Caco-2 (cell line): ENCODE measurements at regions of chr18 and their contacts with region 1.

Region 1: DNA sequence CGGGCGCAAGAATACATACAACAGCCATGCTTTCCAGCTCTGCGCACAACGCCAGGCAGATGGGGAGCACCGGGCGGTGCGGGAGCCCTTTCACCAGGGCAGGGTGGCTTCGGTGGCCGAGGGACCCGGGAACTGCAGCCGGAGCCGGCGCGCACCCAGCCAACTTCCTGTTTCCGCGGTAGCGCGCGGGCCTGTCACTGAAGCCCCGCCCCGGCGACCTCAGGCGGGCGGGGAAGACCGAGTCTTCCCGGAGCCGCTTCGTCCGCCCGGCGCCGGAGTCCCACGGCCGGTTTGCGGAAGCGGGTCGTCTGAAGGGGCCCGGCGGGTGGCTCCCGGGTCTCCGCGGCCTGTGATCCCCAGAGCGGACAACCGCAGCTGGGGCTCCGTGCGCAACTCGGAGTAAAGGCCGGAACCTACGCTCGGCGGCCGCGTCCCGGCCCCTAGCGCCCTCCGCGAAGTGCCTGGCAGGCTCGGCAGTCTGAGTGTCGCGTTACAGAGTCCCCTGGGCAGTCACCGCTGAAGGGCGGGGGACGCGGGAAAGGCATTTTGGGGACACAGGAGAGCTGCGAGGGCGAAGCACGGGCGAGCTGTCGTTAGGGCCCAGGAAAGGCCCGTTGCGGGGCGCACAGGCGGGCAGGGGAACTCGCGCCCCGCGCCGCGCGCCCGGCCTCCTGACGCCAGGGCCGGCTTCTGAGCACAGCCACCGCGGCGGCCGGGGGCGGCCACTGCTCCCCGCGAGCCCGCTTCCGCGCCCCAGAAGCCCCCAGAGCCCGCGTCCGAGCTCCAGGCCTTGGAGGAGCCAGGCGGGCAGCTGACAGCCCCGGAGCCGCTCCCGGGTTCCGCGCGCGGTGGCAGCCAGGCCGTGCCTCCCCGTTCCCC is at the start of gene MPPE1:
- DNase-seq: peak; percentile 87 to 93
- H3K4me3 ChIP-seq: peak within 1 kb of the TSS; percentile 87
- H3K4me3 Mint-ChIP-seq: peak within 1 kb of the TSS; percentile 89
- H3K27ac Mint-ChIP-seq: peak within 1 kb of the TSS; percentile 91
- H3K4me1 ChIP-seq: peaks cover 25% of the 10 kb centered on the region
- H3K4me1 Mint-ChIP-seq: peaks cover 5% of the 10 kb centered on the region
- H3K27me3 ChIP-seq: no peaks in the 10 kb centered on the region
- H3K27me3 Mint-ChIP-seq: no peaks in the 10 kb centered on the region
- CTCF ChIP-seq: no peak
- total RNA-seq, gene MPPE1: 47.4 and 52.6 TPM in 2 replicates

Region 2: DNA sequence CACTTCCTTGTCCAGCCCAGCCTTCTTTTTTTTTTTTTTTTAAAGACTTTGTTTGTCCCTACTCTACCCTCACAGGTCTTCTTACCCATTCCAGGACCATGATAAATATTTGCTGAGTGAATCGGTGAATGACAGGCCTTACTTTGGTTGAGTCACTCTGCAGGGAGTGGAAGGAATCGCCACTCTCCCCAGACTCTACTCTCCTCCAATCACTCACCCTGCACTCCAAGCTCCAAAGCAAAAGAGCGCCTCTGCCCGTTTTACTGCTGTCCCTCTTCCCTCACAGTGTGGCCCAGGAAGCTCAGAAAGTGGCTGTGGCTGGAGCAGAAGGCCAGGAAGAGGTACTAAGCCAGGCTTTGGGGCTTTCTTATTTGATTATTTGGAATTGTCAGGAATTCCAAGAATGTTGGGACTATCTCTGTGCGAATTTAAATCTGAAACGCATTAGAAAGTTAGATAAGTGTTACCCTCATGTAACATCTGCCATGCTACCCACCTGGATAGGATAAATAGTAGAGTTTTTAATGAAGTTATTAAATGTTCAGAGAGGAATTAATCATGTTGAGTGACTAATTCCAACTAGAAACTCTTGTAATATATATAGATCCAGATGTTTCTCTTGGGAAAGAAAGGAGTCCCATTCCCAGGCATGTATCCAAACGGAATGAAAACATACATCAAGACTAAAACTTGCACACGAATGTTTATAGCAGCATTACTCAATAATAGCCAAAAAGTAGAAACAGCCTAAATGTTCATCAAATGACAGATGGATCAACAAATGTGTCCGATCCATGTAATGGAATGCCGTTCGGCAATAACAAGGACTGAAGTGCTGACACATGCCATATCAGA is 100.2 kb before region 1 on chr18:
- CTCF ChIA-PET with region 1: no interaction called
- POLR2A ChIA-PET with region 1: no interaction called
- intact Hi-C with region 1: no loop called
- DNase-seq: peak; percentile 66 to 71
- H3K4me3 ChIP-seq: no peak overlapping the region
- H3K4me3 Mint-ChIP-seq: peak overlapping the region; percentile 51
- H3K27ac Mint-ChIP-seq: peak overlapping the region; percentile 79
- H3K4me1 ChIP-seq: peaks cover 56% of the 10 kb centered on the region
- H3K4me1 Mint-ChIP-seq: peaks cover 42% of the 10 kb centered on the region
- H3K27me3 ChIP-seq: no peaks in the 10 kb centered on the region
- H3K27me3 Mint-ChIP-seq: no peaks in the 10 kb centered on the region
- CTCF ChIP-seq: no peak

Region 3: GRCh38 chr18:11887305-11888262 is 20.8 kb before region 1 on chr18:
- CTCF ChIA-PET with region 1: no interaction called
- POLR2A ChIA-PET with region 1: interaction called, 3 read pairs
- intact Hi-C with region 1: loop called (anchors 1 kb)
- DNase-seq: peak; percentile 82 to 89
- H3K4me3 ChIP-seq: no peak overlapping the region
- H3K4me3 Mint-ChIP-seq: peak overlapping the region; percentile 12
- H3K27ac Mint-ChIP-seq: peak overlapping the region; percentile 78
- H3K4me1 ChIP-seq: peaks cover 54% of the 10 kb centered on the region
- H3K4me1 Mint-ChIP-seq: peaks cover 34% of the 10 kb centered on the region
- H3K27me3 ChIP-seq: no peaks in the 10 kb centered on the region
- H3K27me3 Mint-ChIP-seq: no peaks in the 10 kb centered on the region
- CTCF ChIP-seq: no peak

Region 4: DNA sequence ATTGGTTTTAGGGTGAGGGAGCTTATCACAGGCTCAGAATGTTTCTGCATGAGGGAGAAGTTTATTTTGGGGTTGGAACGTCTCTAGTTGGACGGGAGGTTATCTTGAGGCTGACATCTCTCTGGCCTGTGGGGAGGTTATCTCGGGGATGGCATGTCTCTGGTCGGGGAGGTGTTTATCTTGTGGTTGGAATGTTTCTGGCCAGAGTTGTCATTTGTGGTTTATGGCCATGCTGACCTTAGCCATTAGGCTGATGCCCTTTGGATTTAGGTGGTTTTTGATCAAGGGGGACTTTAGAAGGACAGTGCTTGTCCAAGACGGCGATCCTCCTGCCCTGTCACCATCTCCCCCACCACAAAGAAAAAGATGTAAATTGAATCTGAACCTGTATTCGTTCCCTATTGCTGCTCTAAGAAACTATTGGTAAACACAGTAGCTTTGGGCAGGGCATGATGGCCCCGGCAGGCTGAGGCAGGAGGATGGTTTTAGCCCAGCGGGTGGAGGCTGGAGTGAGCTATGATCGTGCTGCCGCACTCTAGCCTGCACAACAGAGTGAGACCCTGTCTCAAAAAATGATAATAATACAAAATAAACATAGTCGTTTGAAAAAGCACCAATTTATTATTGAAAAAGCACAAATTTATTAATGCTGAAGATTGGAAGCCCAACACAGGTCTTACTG is 17.5 kb after region 1 on chr18:
- CTCF ChIA-PET with region 1: no interaction called
- POLR2A ChIA-PET with region 1: no interaction called
- intact Hi-C with region 1: loop called (anchors 2 kb)
- DNase-seq: peak; percentile 76 to 88
- H3K4me3 ChIP-seq: no peak overlapping the region
- H3K4me3 Mint-ChIP-seq: peak overlapping the region; percentile 9
- H3K27ac Mint-ChIP-seq: peak overlapping the region; percentile 42
- H3K4me1 ChIP-seq: peaks cover 33% of the 10 kb centered on the region
- H3K4me1 Mint-ChIP-seq: peaks cover 31% of the 10 kb centered on the region
- H3K27me3 ChIP-seq: no peaks in the 10 kb centered on the region
- H3K27me3 Mint-ChIP-seq: no peaks in the 10 kb centered on the region
- CTCF ChIP-seq: no peak

Region 5: DNA sequence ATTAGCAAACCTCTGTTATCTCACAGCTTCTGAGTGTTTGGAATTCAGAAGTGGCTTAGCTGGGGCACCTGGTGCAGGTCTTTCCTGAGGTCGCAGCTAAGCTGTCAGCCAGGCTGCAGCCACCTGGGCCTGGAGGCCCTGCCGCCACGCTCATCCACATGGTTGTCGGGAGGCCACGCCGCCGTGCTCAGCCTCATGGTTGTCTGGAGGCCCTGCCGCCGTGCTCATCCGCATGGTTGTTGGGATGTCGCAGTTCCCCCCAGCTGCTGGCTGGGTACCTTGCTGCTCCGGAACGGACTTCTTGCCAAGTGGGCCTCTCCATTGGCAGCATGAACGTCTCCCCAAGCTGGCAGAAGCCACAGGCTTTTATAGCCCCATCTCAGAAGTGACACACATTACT is 24.0 kb after region 1 on chr18:
- CTCF ChIA-PET with region 1: no interaction called
- POLR2A ChIA-PET with region 1: no interaction called
- intact Hi-C with region 1: loop called (anchors 2 kb)
- DNase-seq: peak in 1 of 2 experiments; percentile 33
- H3K4me3 ChIP-seq: no peak overlapping the region
- H3K4me3 Mint-ChIP-seq: no peak overlapping the region
- H3K27ac Mint-ChIP-seq: no peak overlapping the region
- H3K4me1 ChIP-seq: peaks cover 7% of the 10 kb centered on the region
- H3K4me1 Mint-ChIP-seq: no peaks in the 10 kb centered on the region
- H3K27me3 ChIP-seq: no peaks in the 10 kb centered on the region
- H3K27me3 Mint-ChIP-seq: no peaks in the 10 kb centered on the region
- CTCF ChIP-seq: no peak

Region 6: DNA sequence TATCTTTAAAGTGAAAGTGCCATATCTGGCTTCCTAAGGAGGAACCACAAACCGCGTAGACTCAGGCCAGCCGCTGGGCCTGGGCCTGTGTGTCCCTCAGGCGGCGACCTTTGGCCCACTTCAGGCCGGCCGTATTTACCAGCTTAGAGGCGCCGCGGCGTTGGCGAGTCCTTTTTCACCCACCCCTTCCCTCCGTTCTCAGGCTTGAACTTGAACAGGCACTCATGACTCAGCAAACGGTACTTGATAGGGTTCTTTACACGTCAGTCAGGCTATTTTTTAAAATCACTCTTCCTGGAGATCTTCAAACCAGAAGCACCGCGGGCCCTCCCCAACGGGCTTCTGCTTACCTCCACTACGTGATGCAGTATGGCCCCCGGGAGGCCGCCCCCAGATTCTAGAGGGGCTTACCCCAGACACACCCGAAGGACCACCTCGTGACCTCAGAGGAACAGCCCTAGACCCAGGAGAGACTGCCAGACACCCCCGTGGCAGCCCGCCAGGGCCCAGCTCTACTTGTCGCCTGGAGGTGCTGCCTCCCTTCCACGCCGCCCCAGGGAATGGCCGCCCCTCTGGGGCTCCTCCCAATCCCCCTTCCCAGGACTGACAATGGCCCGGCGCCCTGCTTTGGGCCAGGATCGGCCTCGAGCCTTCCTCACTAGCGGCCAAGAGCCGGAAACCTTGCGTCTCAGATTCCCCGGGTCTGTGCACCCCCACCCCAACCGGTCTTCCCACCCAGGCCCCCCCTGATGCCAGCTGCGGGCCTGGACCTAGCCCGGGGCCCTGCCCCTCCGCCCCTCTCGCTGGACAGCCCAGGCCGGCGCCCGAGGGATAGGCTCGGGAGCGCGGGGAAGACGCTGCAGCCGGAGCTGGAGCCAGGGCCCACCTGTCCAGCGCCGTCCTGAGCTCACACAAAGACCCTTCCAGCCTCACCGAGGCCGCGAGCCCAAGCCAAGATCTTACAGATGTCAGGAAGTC is 39.1 kb after region 1 on chr18:
- CTCF ChIA-PET with region 1: no interaction called
- POLR2A ChIA-PET with region 1: no interaction called
- intact Hi-C with region 1: no loop called
- DNase-seq: peak; percentile 66 to 79
- H3K4me3 ChIP-seq: no peak overlapping the region
- H3K4me3 Mint-ChIP-seq: peak overlapping the region; percentile 43
- H3K27ac Mint-ChIP-seq: no peak overlapping the region
- H3K4me1 ChIP-seq: peaks cover 21% of the 10 kb centered on the region
- H3K4me1 Mint-ChIP-seq: peaks cover 18% of the 10 kb centered on the region
- H3K27me3 ChIP-seq: no peaks in the 10 kb centered on the region
- H3K27me3 Mint-ChIP-seq: no peaks in the 10 kb centered on the region
- CTCF ChIP-seq: no peak

Region 7: GRCh38 chr18:12053289-12053688 is 144.9 kb after region 1 on chr18:
- CTCF ChIA-PET with region 1: no interaction called
- POLR2A ChIA-PET with region 1: no interaction called
- intact Hi-C with region 1: no loop called
- DNase-seq: no peak
- H3K4me3 ChIP-seq: no peak overlapping the region
- H3K4me3 Mint-ChIP-seq: no peak overlapping the region
- H3K27ac Mint-ChIP-seq: no peak overlapping the region
- H3K4me1 ChIP-seq: no peaks in the 10 kb centered on the region
- H3K4me1 Mint-ChIP-seq: no peaks in the 10 kb centered on the region
- H3K27me3 ChIP-seq: no peaks in the 10 kb centered on the region
- H3K27me3 Mint-ChIP-seq: peaks cover 23% of the 10 kb centered on the region
- CTCF ChIP-seq: no peak